ACHN (cell line): ENCODE measurements at regions of chr3 and their contacts with region 1.

Region 1: DNA sequence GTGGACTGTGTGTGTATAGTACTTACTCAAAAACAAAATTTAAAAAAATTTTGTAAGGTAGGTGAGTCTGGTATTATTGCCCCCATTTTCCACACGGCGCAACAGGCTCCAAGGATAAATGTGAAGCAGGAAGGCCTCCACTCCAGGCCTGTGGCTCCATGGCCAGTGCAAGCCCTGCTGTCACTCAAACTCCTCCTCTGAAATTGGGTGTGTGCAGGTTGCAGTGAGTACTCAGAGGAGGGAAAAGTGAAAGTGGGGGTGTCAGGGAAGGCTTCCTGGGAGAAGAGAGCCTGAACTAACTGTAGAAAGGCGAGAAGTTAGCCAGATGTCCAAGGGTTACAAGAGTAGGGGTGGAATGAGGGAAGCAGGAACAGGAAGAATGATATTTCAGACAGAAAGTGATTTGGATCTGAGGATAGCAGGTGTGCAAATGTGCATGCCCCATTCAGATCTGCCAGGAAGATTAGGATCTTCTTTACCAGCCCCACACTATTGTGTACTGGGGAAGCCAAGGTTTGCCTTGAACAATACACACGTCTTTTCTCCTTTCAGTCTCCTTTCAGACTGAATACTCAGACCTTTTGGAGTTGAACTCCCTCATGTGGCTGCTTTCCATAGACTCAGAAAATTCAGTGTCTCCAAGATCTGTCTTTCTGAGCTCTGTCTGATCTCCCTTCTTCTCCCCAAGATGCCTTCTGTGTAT is 48.7 kb upstream of the RYK start:
- DNase-seq: peak; percentile 28

Region 2: DNA sequence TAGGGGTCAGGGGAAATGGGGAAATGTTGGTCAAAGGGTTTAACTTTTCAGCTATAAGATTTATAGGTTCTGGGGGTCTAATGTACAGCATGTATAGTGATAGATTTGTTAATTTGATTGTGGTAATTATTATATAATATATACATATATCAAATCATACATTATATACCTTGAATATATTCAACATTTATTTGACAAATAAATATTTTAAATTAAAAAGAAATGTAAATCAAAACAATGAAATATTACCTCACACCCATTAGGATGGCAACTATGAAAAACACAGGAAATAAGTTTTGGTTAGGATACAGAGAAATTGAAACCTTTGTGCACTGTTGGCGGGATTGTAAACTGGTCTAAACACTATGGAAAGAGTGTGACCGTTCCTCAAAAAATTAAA is 184.6 kb before region 1 on chr3:
- in situ Hi-C with region 1: no loop called
- DNase-seq: no peak

Region 3: DNA sequence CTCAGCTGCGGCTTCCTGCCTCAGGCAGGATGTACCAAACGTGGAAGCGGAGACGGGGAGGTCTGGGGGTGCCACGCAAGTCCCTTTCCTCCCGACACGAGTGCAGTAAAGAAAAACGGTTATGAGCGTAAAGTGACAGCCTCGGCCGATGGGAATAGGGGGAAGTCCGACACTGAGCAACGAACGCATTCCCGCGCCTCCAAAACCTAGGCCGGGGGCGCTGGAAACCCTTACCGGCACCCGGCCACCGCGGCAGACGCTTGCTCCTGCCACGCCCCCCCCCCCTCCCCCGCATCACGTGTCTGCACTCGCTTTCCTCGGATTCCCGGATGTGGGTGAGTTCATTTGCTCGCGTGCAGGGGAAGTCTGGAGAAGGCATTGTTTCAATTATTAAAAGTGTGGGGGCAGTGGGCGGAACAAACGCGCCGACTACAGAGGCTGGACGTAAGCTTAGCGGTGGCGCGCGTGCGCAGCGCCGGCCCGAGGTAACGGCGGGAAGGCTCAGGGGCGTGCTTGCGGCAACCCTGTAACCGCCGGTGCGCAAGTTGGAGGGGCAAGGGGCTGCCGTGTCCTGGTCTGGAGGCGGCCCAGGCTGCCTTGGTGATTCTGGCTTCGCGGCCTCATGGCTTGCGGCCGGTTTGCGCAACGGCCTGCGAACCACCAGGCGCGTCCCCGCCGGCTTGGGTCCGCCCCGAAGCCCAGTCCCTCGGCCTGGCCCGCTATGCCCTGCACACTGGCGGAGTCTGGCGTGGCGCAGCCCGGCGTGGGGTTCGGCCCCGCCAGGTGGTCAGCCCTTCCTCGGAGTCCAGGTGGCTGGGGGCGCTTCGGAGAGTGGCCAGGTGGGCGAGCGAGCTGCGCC is 186.6 kb after region 1 on chr3 and contains the starts of genes ANAPC13 and CEP63:
- in situ Hi-C with region 1: loop called (anchors 25 kb)
- DNase-seq: peak; percentile 97